Left lung (tissue), 14 donors: ENCODE measurements at regions of chr17 and their contacts with region 1.

Region 1: GRCh38 chr17:59004338-59005111 is 102.2 kb downstream of the TRIM37 start:
- DNase-seq: peak in 3 of 4 donors; percentile 41 to 70 (median 44)
- ATAC-seq: peak; percentile 88
- H3K4me3 ChIP-seq: no peak overlapping the region
- H3K27ac ChIP-seq: no peak overlapping the region
- H3K4me1 ChIP-seq: peaks cover 0 to 25% of the 10 kb centered on the region in 2 donors
- H3K27me3 ChIP-seq: no peaks in the 10 kb centered on the region
- CTCF ChIP-seq: peak; percentile 86 to 96

Region 2: DNA sequence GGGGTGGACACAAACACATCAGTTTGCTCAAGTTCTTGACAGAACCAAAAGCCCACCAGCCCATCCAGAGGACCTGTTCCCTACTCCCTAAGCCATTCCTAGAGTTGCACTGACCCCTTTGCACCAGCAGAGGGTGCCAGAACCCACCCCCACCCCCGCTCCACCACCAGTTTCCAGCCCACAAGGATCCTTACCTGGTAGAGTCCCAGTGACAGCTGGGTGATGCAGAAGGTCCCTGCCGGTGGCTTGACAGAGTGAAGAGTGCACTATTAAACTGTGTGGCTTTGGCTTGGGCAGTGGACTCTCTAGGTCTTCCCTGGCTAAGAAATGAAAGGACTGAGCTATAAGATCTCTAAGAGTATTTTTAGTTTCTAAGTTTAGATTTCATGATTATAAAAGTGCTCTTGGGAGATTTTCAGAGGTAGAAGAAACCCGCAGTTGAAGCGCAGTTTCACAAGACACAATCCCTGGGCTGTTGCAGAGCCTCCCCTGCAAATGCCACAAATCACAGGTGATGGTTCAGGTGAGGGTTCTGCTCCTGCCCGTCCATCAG is 416.7 kb before region 1 on chr17:
- intact Hi-C with region 1: loop called in 1 of 2 experiments (anchors 10 kb)
- DNase-seq: peak in 3 of 4 donors; percentile 33 to 55 (median 41)
- ATAC-seq: peak; percentile 94
- H3K4me3 ChIP-seq: no peak overlapping the region
- H3K27ac ChIP-seq: no peak overlapping the region
- H3K4me1 ChIP-seq: no peaks in the 10 kb centered on the region
- H3K27me3 ChIP-seq: no peaks in the 10 kb centered on the region
- CTCF ChIP-seq: peak; percentile 89 to 90

Region 3: DNA sequence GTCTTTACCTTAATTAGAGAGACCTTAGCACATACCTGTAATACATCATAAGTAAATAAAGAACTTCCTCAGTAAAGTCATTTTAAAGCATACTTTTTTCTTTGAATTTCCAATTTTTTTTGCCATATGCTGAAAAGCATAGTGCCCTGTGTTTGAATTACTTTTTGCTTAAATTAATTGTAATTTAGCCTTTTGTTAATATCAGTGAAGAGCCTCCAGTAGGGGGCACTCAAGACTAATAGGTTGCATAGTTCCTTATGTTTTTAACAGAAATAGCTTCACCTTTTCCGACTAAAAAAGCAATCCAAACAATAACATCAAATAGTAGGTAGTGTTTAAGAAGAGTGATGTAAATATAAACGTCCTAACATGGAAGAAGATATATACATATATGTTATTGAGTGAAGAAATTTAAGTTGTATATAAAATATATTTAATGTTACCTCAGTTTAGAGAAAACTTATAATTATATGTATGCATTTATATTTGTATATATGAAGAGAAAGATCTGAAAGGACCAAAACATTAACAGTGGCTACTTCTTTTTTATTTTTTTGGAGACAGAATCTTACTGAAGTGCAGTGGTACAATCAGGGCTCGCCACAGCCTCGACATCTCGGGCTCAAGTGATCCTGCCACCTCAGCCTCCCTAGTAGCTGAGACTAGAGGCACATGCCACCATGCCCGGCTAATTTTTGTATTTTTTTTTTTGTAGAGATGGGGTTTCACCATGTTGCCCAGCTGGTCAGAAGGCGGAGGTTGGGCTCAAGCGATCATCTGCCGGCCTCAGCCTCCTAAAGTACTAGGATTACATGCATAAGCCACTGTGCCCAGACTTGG is 293.4 kb before region 1 on chr17:
- intact Hi-C with region 1: loop called in 1 of 2 experiments (anchors 5 kb)
- DNase-seq: peak in 1 of 4 donors; percentile 47
- ATAC-seq: peak; percentile 62
- H3K4me3 ChIP-seq: no peak overlapping the region
- H3K27ac ChIP-seq: no peak overlapping the region
- H3K4me1 ChIP-seq: no peaks in the 10 kb centered on the region
- H3K27me3 ChIP-seq: no peaks in the 10 kb centered on the region
- CTCF ChIP-seq: peak; percentile 66 to 83

Region 4: GRCh38 chr17:58755577-58756245 is 248.8 kb before region 1 on chr17 and contains the start of gene PPM1E:
- intact Hi-C with region 1: no loop called
- DNase-seq: peak; percentile 35 to 82 (median 52)
- ATAC-seq: peak; percentile 97
- H3K4me3 ChIP-seq: peak within 1 kb of the TSS; percentile 38 to 46
- H3K27ac ChIP-seq: no peak within 1 kb of the TSS
- H3K4me1 ChIP-seq: peaks cover 7 to 17% of the 10 kb centered on the region in 2 donors
- H3K27me3 ChIP-seq: peaks cover 34 to 89% of the 10 kb centered on the region in 2 donors
- CTCF ChIP-seq: no peak
- polyA plus RNA-seq, gene PPM1E: 0.29 to 0.68 (median 0.52) TPM